IMR-90 (cell line): ENCODE measurements at regions of chr12 and their contacts with region 1.

Region 1: DNA sequence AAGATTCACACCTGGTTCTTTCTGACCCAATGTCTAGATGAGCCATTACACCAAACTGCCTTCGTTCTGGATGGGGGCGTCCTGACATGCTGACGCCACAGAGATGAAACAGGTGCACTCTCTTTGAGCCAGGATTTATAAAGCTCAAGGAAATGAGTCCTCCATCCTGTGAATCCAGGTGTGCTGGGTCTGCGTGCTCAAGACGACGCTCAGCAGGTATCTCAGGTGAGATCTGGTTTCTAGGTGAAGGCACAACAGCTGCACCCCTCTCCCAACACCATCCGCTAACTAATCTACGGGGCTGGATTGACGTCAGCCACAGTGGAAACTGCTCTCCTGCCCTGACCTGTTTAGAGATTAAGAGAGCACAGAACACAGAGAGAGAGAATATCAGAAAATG is 61.6 kb downstream of the KSR2 start:
- DNase-seq: no peak
- ATAC-seq: no peak
- H3K4me3 ChIP-seq: no peak overlapping the region
- H3K27ac ChIP-seq: no peak overlapping the region
- H3K4me1 ChIP-seq: no peaks in the 10 kb centered on the region
- H3K27me3 ChIP-seq: no peaks in the 10 kb centered on the region
- CTCF ChIP-seq: no peak
- POLR2A ChIP-seq: no peak
- RAD21 ChIP-seq: no peak

Region 2: DNA sequence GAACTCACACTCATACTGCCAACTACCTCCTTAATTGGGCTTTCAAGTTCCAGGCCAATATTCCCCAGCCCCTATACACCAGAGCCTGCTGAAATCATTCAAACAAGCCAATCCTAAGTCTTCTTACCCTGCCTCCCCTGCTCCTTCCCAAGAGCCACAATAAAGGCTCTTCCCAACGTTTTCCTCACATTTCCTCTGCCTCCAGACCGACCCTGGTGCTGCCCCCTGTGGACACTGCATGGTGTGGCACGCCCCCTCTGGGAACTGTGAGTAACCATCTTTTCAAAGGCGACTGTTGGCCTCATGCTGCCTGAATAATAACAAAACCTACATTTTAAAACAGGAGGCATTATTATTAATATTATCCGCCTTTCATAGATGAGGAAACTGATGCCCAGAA is 434.2 kb before region 1 on chr12:
- CTCF ChIA-PET with region 1: no interaction called
- POLR2A ChIA-PET with region 1: interaction called, 23 read pairs
- dilution Hi-C with region 1: no loop called
- in situ Hi-C with region 1: no loop called
- intact Hi-C with region 1: no loop called
- DNase-seq: no peak
- ATAC-seq: no peak
- H3K4me3 ChIP-seq: no peak overlapping the region
- H3K27ac ChIP-seq: no peak overlapping the region
- H3K4me1 ChIP-seq: no peaks in the 10 kb centered on the region
- H3K27me3 ChIP-seq: no peaks in the 10 kb centered on the region
- CTCF ChIP-seq: no peak
- POLR2A ChIP-seq: no peak
- RAD21 ChIP-seq: no peak

Region 3: DNA sequence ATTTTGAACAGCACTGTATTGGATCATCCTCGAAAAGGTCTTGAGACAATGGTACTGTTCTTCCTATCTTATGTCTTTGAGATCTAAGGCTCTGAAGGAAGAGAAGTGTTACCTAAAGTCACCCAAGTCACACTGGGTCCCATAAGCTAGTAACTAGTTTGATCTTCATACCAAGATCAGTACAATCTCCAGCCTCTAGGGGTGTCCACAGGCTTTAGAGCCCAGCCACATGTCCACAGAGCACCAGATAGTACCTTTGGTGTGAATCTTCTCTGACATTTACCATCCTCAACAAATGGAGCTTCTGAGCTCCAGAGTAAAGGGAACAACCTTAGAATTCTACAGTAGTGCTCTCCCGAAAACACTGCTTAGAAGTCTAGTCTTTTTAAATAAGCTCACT is 17.1 kb before region 1 on chr12:
- CTCF ChIA-PET with region 1: no interaction called
- POLR2A ChIA-PET with region 1: no interaction called
- dilution Hi-C with region 1: no loop called
- in situ Hi-C with region 1: no loop called
- intact Hi-C with region 1: no loop called
- DNase-seq: no peak
- ATAC-seq: no peak
- H3K4me3 ChIP-seq: no peak overlapping the region
- H3K27ac ChIP-seq: no peak overlapping the region
- H3K4me1 ChIP-seq: no peaks in the 10 kb centered on the region
- H3K27me3 ChIP-seq: no peaks in the 10 kb centered on the region
- CTCF ChIP-seq: no peak
- POLR2A ChIP-seq: no peak
- RAD21 ChIP-seq: no peak

Region 4: GRCh38 chr12:117968826-117969659 is 61.8 kb after region 1 on chr12 and contains the start of gene KSR2:
- CTCF ChIA-PET with region 1: no interaction called
- POLR2A ChIA-PET with region 1: no interaction called
- dilution Hi-C with region 1: no loop called
- in situ Hi-C with region 1: no loop called
- intact Hi-C with region 1: no loop called
- DNase-seq: no peak
- ATAC-seq: peak; percentile 42; the same call in 1 of the 2 replicates
- H3K4me3 ChIP-seq: no peak within 1 kb of the TSS; the same call in 1 of the 2 replicates
- H3K27ac ChIP-seq: no peak within 1 kb of the TSS
- H3K4me1 ChIP-seq: no peaks in the 10 kb centered on the region
- H3K27me3 ChIP-seq: peaks cover 13% of the 10 kb centered on the region
- CTCF ChIP-seq: no peak
- POLR2A ChIP-seq: no peak
- RAD21 ChIP-seq: no peak
- total RNA-seq, gene KSR2: not detected in 2 replicates